HEK293 (cell line): ENCODE measurements at regions of chr6 and their contacts with region 1.

Region 1: DNA sequence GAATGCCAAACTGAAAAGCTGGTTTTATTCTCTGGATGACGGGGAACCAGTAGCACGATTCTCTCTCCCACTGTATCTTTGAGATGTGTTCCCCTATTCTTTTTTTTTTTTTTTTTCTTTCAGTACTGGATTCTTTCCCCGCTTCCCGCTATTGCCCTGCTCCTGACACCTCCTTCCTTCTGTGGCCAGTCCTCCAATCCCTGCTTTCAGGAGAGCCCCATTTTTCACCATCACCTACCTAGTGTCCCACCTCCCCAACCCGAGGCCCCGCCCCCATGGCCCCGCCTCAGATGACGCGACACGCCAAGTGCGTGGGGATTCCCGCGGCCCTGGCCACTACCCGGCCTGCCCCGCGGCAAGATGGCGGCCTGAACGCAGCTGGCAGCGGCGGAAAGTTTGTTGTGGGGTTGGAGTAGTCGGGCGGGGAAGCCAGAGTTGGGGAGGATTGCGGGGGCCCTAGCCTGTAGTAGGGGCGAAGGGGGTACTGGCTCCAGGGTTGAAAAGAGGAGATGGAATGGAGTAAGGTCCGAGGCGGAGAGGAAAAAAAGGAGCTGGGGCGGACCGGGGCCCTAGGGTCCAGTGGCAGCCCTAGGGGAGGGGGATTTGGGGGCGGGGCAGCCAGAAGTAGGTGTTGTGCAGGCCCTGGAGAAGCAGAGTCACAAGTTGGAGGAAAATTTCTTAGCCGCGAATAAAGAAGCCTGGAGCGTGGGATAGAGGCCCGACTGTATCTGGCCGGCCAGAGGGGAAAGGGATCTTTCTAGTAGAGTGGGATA is at the start of gene TJAP1:
- H3K4me3 ChIP-seq: peak within 1 kb of the TSS; percentile 81
- H3K27ac ChIP-seq: peak within 1 kb of the TSS; percentile 50
- H3K4me1 ChIP-seq: peaks cover 10% of the 10 kb centered on the region
- CTCF ChIP-seq: no peak

Region 2: DNA sequence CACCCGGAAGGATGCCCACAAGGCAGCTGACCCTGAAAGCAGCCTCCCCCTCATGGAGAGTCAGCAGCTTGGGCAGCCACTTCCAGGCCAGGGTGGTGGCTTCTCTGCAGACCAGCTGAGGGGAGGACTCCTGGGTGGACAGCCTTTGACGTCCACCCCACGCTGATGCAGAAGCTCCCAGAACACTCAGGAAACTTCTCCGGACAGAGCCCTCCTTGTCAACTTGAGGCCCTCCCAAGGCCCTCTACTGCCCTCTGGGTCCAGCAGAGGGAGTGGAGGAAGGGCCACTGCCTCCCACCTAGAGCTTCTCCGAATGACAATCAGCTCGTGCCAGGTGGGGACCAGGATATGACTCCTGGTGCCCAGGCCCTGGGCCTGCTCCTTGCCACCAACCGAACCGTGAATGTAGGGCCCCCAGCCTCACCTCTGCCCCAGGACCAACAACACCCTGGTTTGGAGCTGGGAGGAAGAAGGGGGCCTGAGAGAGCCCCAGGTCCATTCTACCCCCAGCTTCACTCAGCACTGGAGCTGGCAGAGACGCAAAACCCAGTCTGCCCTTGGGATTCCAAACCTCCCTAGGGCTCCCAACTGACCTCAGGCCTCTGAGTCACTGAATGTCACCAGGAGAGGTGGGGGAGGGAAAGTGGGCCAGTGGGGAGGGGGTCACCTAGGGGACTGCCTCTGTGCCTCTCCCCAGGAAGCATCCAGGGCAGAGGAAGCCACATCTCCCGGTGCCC is 190.3 kb before region 1 on chr6:
- CTCF ChIA-PET with region 1: no interaction called
- POLR2A ChIA-PET with region 1: no interaction called
- H3K4me3 ChIP-seq: no peak overlapping the region
- H3K27ac ChIP-seq: no peak overlapping the region
- H3K4me1 ChIP-seq: no peaks in the 10 kb centered on the region
- CTCF ChIP-seq: no peak

Region 3: DNA sequence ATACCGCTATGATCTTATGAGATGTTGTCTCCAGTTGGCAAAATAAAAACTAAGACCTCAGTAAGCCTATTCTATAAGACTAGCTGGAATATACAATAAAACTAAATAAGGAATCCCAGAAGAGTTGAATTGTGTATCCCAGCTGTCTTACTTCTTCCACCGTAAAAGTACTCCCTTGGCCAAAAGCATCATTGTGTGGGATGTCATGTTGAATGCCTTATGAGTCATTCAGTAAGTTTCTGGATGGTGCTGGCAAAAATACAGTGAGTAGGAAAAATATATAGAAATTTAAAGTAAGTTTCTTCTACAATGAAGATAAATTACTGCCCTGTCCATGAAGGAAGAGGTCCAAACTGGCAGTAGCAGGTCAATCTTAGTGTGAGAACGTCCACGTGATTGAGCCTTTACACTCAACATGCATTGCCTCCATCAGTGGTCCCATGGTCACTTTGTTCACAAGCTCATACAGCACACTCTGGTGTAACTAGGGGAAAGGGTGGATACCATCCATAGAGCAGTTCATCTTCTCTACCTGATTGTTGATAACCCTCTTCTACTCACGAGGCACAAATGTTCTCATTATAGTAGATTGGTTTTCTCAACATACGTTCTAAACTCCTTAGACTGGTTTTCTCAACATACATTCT is 94.3 kb before region 1 on chr6:
- CTCF ChIA-PET with region 1: no interaction called
- POLR2A ChIA-PET with region 1: interaction called, 11 read pairs
- H3K4me3 ChIP-seq: no peak overlapping the region
- H3K27ac ChIP-seq: no peak overlapping the region
- H3K4me1 ChIP-seq: no peaks in the 10 kb centered on the region
- CTCF ChIP-seq: no peak

Region 4: GRCh38 chr6:43489277-43490072 is 12.1 kb after region 1 on chr6:
- CTCF ChIA-PET with region 1: interaction called, 3 read pairs
- POLR2A ChIA-PET with region 1: interaction called, 13 read pairs
- H3K4me3 ChIP-seq: no peak overlapping the region
- H3K27ac ChIP-seq: no peak overlapping the region
- H3K4me1 ChIP-seq: no peaks in the 10 kb centered on the region
- CTCF ChIP-seq: no peak

Region 5: DNA sequence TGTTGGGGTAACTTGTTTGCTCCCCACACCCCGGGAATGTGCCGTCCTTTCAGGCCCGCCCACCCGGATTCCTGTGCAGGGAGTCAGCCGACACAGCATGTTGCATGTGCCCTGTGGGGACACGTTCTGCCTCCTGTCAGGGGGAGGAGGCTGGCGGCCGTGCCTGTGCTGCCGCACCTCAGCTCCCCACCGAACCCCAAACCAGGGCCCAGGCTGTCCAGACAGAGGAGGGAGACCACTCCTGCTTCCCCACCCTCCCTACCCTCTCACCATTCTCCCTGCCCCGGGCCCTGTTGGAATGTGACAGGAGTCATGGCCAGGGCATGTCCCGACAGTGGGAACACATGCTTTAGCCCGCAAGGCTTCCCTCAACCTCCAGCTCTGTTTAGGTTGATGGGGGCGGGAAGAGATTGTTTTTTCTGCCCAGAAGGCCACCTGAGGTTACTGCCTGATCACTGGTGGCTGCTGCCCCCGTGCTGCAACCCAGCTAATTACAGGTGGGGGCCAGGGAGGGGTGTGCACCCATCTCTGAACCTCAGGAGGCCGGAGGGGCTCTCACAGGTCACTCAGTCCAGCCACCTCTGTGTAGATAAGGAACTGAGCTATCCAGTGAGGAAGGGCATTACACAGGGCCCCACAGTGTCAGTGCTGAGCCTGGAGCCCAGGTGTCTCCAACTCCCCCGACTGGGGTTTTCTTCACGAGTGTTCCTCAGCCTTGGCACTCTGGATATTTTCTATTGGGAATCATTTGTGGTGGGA is 19.1 kb after region 1 on chr6:
- CTCF ChIA-PET with region 1: interaction called, 14 read pairs
- POLR2A ChIA-PET with region 1: interaction called, 8 read pairs
- H3K4me3 ChIP-seq: no peak overlapping the region
- H3K27ac ChIP-seq: no peak overlapping the region
- H3K4me1 ChIP-seq: peaks cover 7% of the 10 kb centered on the region
- CTCF ChIP-seq: 0 out of 2 replicates have a peak, but pooled peaks have one; percentile 22